ENCODE measurements at regions of chr13 and their contacts with region 1.

Region 1: DNA sequence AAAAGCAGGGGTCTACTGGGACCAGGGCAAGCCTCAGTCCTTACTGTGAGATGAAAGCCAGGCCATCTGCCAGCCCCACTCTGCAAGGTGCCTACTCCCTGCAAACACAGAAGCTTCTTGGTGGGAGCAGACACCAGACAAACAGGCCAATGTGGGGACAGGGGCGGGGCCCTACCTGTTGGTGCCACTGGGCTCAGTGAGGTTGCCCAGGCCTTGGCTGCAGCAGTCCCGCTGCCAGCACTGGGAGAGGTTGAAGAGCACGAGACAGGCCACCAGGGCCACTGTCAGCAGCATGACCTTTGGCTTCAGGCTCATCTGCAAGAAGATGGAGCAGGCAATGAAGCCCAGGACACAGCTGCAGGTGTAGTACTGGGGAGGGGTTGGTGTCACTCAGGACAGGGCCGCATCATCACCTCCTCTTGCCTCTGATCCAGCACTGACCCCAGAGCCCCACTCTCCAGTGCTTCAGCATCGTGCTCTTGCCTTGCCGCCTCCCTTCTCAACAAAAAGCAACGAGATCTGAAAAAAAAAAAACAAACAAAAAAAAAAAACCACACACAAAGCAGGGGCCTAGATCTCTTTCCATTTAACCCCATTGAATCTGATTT is 72.6 kb downstream of the NBEA start:
- DNase-seq: no peak
- ATAC-seq: no peak
- H3K4me3 ChIP-seq: no peak overlapping the region
- H3K4me3 Mint-ChIP-seq: no peak overlapping the region
- H3K27ac ChIP-seq: no peak overlapping the region
- H3K27ac Mint-ChIP-seq: no peak overlapping the region
- H3K4me1 ChIP-seq: no peaks in the 10 kb centered on the region
- H3K4me1 Mint-ChIP-seq: no peaks in the 10 kb centered on the region
- H3K27me3 ChIP-seq: no peaks in the 10 kb centered on the region
- H3K27me3 Mint-ChIP-seq: no peaks in the 10 kb centered on the region
- CTCF ChIP-seq: no peak

Region 2: DNA sequence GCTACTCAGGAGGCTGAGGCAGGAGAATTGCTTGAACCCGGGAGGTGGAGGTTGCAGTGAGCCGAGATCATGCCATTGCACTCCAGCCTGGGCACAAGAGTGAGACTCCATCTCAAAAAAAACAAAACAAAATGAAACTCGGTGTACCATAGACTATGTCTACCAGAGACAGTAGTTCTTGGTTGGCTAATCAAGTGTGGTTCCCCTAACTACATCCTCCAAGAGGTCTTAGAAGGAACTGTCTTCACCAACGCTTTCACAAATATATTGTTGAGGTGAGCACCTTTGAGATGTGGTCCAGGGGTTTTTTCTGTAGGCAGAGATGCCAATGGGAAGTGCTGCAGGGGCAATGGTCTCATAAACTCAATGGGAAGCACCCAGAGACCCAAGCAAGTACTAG is 1148.8 kb before region 1 on chr13:
- CTCF ChIA-PET with region 1: no interaction called
- POLR2A ChIA-PET with region 1: no interaction called
- intact Hi-C with region 1: no loop called
- DNase-seq: no peak
- ATAC-seq: no peak
- H3K4me3 ChIP-seq: no peak overlapping the region
- H3K4me3 Mint-ChIP-seq: no peak overlapping the region
- H3K27ac ChIP-seq: no peak overlapping the region
- H3K27ac Mint-ChIP-seq: no peak overlapping the region
- H3K4me1 ChIP-seq: no peaks in the 10 kb centered on the region
- H3K4me1 Mint-ChIP-seq: no peaks in the 10 kb centered on the region
- H3K27me3 ChIP-seq: no peaks in the 10 kb centered on the region
- H3K27me3 Mint-ChIP-seq: no peaks in the 10 kb centered on the region
- CTCF ChIP-seq: no peak

Region 3: GRCh38 chr13:34833562-34834182 is 181.0 kb before region 1 on chr13:
- CTCF ChIA-PET with region 1: no interaction called
- POLR2A ChIA-PET with region 1: no interaction called
- intact Hi-C with region 1: no loop called
- DNase-seq: no peak
- ATAC-seq: no peak
- H3K4me3 ChIP-seq: no peak overlapping the region
- H3K4me3 Mint-ChIP-seq: no peak overlapping the region
- H3K27ac ChIP-seq: no peak overlapping the region
- H3K27ac Mint-ChIP-seq: no peak overlapping the region
- H3K4me1 ChIP-seq: no peaks in the 10 kb centered on the region
- H3K4me1 Mint-ChIP-seq: no peaks in the 10 kb centered on the region
- H3K27me3 ChIP-seq: no peaks in the 10 kb centered on the region
- H3K27me3 Mint-ChIP-seq: peaks cover 8% of the 10 kb centered on the region
- CTCF ChIP-seq: no peak

Region 4: GRCh38 chr13:35131471-35131870 is 116.8 kb after region 1 on chr13:
- CTCF ChIA-PET with region 1: no interaction called
- POLR2A ChIA-PET with region 1: no interaction called
- intact Hi-C with region 1: loop called in 1 of 2 experiments (anchors 5 kb)
- DNase-seq: no peak
- ATAC-seq: no peak
- H3K4me3 ChIP-seq: no peak overlapping the region
- H3K4me3 Mint-ChIP-seq: no peak overlapping the region
- H3K27ac ChIP-seq: no peak overlapping the region
- H3K27ac Mint-ChIP-seq: no peak overlapping the region
- H3K4me1 ChIP-seq: no peaks in the 10 kb centered on the region
- H3K4me1 Mint-ChIP-seq: no peaks in the 10 kb centered on the region
- H3K27me3 ChIP-seq: no peaks in the 10 kb centered on the region
- H3K27me3 Mint-ChIP-seq: no peaks in the 10 kb centered on the region
- CTCF ChIP-seq: no peak

Measured in CD4-positive, alpha-beta T cell (primary cell).